Dorsolateral prefrontal cortex (tissue), 120 donors: ENCODE measurements at regions of chr19 and their contacts with region 1.

Region 1: DNA sequence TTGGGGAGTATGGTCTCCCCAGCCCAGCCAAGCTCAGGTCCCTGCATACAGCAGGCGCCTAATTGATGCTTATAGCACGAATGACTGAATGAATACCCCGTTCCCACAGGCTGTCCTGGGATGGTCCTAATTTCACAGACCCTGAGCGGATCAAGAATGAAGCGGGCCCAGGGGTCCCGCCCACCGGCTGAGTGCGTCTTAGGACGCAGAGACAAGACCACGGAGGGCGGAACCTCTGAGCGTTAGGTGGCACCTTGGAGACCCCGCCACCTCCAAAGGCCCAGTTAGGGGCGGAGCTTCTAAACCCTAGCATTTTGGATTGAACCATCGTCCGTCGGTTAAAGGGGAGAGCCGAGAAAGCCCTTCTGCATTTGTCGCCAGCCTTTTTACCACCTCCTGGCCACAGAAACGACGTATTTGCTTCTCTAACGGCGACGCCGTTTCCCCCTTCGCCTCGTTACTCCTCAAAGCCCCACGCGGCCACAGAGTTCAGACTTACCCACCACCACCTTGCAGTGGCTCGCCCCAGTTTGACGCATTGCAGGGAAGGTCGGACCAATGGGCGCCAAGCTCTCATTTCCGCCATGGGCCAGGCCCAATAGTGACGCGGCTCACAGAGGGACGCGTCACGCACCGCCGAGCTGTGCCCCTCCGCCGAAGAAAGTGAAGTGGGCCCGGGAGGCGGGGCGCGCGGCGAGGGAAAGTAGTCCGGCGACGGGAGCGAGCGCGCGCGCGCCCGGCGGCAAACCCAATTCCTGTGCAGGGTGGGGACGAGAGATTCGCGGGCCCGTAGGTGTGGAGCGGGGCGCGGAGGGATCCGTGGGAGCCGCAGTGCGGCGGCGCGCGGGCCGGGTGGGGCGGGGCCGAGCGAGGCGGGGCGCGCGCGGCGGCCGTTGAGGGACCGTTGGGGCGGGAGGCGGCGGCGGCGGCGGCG is 479 bp upstream of the CALM3 start:
- DNase-seq: peak; percentile 93 to 97 (median 96)
- H3K4me3 ChIP-seq: peak overlapping the region; percentile 73 to 100 (median 99)
- H3K27ac ChIP-seq: peak overlapping the region; percentile 89 to 100 (median 100)
- H3K27me3 ChIP-seq: no peaks in the 10 kb centered on the region
- CTCF ChIP-seq: peak in 10 of 56 donors; percentile 2 to 32 (median 12)

Region 2: GRCh38 chr19:46585539-46585938 is 15.1 kb before region 1 on chr19:
- intact Hi-C with region 1: loop called in 1 of 2 experiments (anchors 1 kb)
- DNase-seq: no peak
- H3K4me3 ChIP-seq: no peak overlapping the region
- H3K27ac ChIP-seq: no peak overlapping the region
- H3K27me3 ChIP-seq: no peaks in the 10 kb centered on the region
- CTCF ChIP-seq: no peak

Region 3: DNA sequence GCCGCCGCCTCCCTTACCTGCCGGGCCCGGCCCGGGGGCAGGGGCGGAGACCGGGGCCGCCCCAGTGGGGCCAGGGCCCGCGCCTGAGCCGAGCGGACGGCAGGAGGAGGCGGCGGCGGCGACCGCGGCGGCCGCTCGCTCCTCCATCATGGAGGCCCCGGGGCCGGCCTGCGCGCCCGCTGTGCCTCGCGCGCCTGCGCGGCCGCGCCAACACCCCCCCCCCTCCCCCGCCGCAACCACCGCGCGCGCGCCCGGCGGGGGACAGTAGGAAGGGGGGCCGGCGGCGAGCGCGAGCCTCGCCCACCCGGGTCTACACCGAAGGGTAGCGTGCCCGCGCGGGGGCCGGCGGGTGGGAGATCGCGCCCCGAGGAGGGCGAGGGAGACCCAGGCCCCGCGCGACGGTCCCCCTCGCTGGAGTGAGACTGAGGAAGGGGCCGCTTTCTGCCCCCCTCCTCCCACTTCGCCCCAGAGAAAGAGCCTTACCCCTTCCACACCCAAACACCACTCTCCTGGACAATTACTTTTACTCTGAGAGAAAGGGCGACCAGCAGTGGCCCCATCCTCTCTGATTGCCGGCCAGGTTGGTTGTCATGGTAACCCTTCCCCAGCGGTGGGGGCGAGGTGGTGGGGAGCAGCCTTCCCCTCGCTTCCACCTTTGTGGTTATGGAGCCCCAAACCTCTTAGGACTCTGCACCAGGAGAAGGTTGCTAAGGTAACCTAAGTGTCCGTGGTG is 145.8 kb after region 1 on chr19 and contains the start of gene STRN4:
- intact Hi-C with region 1: loop called (anchors 2 to 5 kb)
- DNase-seq: peak in 1 of 10 donors; percentile 35
- H3K4me3 ChIP-seq: peak within 1 kb of the TSS; percentile 74 to 100 (median 96)
- H3K27ac ChIP-seq: peak within 1 kb of the TSS; percentile 80 to 99 (median 93)
- H3K27me3 ChIP-seq: no peaks in the 10 kb centered on the region
- CTCF ChIP-seq: peak in 2 of 56 donors; percentile 0 to 9
- total RNA-seq, gene STRN4: 69.7 to 119 (median 86.8) TPM